ENCODE measurements at regions of chr22 and their contacts with region 1.

Region 1: DNA sequence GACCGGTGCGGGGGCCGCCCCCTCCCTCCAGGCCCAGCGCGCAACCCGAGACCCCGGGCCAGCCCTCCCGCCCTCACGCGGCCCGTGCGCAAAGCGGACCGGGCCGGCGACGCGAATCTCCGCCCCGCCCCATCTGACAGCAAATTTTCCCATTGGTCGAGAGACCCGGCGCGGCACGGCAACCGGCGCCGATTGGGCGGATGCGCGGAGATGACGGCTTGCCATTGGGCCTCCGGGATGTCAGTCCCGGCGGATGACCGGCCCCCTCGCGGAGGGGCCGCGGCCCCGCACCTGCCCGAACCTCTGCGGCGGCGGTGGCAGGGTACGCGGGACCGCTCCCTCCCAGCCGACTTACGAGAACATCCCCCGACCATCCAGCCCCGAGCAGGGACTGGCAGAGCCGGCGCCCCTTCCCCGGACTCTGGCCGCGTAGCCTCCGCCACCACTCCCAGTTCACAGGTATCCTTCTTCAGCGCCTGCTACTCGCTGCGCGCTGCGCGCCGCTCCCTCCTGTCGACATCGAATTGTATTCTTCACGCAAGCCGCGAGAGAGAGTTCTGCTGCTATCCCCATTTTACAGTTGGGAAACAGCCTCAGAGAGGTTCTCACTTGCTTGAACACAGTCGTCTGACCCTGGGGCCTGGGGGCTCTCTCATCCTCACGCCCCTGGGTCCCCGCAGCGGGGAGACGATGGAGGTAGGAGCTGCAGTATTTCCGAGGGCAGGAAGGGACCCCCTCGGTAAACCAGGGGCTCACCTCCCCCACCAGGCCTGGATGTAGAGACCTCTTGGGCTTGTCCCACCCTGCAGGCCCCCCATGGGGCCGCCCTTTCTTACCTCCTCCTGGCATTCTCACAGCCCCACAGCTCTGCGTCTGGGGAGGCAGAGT is at the start of gene ARVCF:
- DNase-seq: peak; percentile 95 to 96
- ATAC-seq: peak; percentile 65 to 74 (median 71)
- H3K4me3 ChIP-seq: peak within 1 kb of the TSS; percentile 78
- H3K4me3 Mint-ChIP-seq: peak within 1 kb of the TSS; percentile 92
- H3K27ac ChIP-seq: no peak within 1 kb of the TSS
- H3K27ac Mint-ChIP-seq: peak within 1 kb of the TSS in 1 of 2 donors; percentile 76
- H3K4me1 ChIP-seq: peaks cover 52% of the 10 kb centered on the region
- H3K4me1 Mint-ChIP-seq: peaks cover 21 to 37% of the 10 kb centered on the region in 2 donors
- H3K27me3 ChIP-seq: no peaks in the 10 kb centered on the region
- H3K27me3 Mint-ChIP-seq: no peaks in the 10 kb centered on the region
- CTCF ChIP-seq: no peak
- total RNA-seq, gene ARVCF: 37.8 to 62.0 (median 38.7) TPM

Region 2: GRCh38 chr22:19795617-19796008 is 221.4 kb before region 1 on chr22:
- intact Hi-C with region 1: no loop called
- DNase-seq: no peak
- ATAC-seq: peak in 1 of 3 donors; percentile 37
- H3K4me3 ChIP-seq: no peak overlapping the region
- H3K4me3 Mint-ChIP-seq: no peak overlapping the region
- H3K27ac ChIP-seq: no peak overlapping the region
- H3K27ac Mint-ChIP-seq: no peak overlapping the region
- H3K4me1 ChIP-seq: no peaks in the 10 kb centered on the region
- H3K4me1 Mint-ChIP-seq: no peaks in the 10 kb centered on the region
- H3K27me3 ChIP-seq: no peaks in the 10 kb centered on the region
- H3K27me3 Mint-ChIP-seq: no peaks in the 10 kb centered on the region
- CTCF ChIP-seq: no peak

Region 3: GRCh38 chr22:19844377-19845053 is 172.5 kb before region 1 on chr22:
- intact Hi-C with region 1: no loop called
- DNase-seq: peak in 1 of 2 donors; percentile 55
- ATAC-seq: peak in 1 of 3 donors; percentile 34
- H3K4me3 ChIP-seq: no peak overlapping the region
- H3K4me3 Mint-ChIP-seq: no peak overlapping the region
- H3K27ac ChIP-seq: no peak overlapping the region
- H3K27ac Mint-ChIP-seq: peak overlapping the region in 1 of 2 donors; percentile 58
- H3K4me1 ChIP-seq: peaks cover 18% of the 10 kb centered on the region
- H3K4me1 Mint-ChIP-seq: peaks cover 0 to 7% of the 10 kb centered on the region in 2 donors
- H3K27me3 ChIP-seq: no peaks in the 10 kb centered on the region
- H3K27me3 Mint-ChIP-seq: no peaks in the 10 kb centered on the region
- CTCF ChIP-seq: no peak

Region 4: GRCh38 chr22:19970479-19971275 is 46.3 kb before region 1 on chr22:
- intact Hi-C with region 1: loop called (anchors 1 kb)
- DNase-seq: peak; percentile 84 to 86
- ATAC-seq: peak; percentile 49 to 65 (median 60)
- H3K4me3 ChIP-seq: no peak overlapping the region
- H3K4me3 Mint-ChIP-seq: peak overlapping the region; percentile 87
- H3K27ac ChIP-seq: peak overlapping the region; percentile 61
- H3K27ac Mint-ChIP-seq: peak overlapping the region; percentile 84 to 85
- H3K4me1 ChIP-seq: peaks cover 76% of the 10 kb centered on the region
- H3K4me1 Mint-ChIP-seq: peaks cover 45 to 60% of the 10 kb centered on the region in 2 donors
- H3K27me3 ChIP-seq: no peaks in the 10 kb centered on the region
- H3K27me3 Mint-ChIP-seq: no peaks in the 10 kb centered on the region
- CTCF ChIP-seq: peak; percentile 96

Region 5: GRCh38 chr22:19986410-19987341 is 30.3 kb before region 1 on chr22:
- intact Hi-C with region 1: loop called (anchors 2 kb)
- DNase-seq: peak; percentile 71 to 79
- ATAC-seq: peak; percentile 91 to 98 (median 97)
- H3K4me3 ChIP-seq: peak overlapping the region; percentile 40
- H3K4me3 Mint-ChIP-seq: peak overlapping the region; percentile 75
- H3K27ac ChIP-seq: no peak overlapping the region
- H3K27ac Mint-ChIP-seq: no peak overlapping the region
- H3K4me1 ChIP-seq: peaks cover 27% of the 10 kb centered on the region
- H3K4me1 Mint-ChIP-seq: peaks cover 0 to 16% of the 10 kb centered on the region in 2 donors
- H3K27me3 ChIP-seq: no peaks in the 10 kb centered on the region
- H3K27me3 Mint-ChIP-seq: no peaks in the 10 kb centered on the region
- CTCF ChIP-seq: no peak

Region 6: DNA sequence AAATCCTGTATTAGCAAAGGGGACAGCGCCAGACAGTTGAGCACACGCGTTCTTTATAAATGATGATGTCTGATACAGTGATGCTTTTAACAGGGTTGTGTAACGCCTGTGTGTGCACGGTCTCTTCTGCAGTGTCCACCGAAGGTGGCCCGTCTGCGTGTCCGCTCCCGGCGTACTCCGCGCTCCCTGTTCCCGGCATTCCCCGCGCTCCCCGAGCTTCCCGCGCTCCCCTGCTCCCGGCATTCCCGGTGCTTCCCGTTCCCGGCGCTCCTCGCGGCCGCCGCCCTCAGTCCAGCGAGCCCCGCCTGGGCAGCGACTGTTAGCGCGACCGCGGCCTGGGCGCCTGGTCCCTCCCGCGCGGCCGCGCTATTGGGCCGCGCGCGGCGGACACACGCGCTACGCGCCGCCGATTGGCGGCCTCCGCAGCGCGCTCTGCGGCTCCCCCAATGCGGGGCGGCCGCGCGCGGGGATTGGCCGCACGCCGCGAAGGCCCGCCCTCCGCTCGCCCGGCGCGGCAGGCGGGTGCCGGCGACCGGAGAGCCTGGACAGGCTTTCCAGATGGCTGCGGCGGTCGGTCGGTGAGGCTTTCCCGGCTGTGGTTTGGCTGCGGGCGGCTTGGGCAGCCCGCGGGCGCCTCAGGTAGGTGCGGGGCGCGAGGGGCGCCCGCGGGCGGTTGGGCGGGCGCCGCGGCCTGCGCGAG is 62.9 kb after region 1 on chr22 and contains the start of gene DGCR8:
- intact Hi-C with region 1: loop called (anchors 2 kb)
- DNase-seq: peak; percentile 73 to 91
- ATAC-seq: peak; percentile 91 to 96 (median 95)
- H3K4me3 ChIP-seq: peak within 1 kb of the TSS; percentile 72
- H3K4me3 Mint-ChIP-seq: peak within 1 kb of the TSS; percentile 82
- H3K27ac ChIP-seq: peak within 1 kb of the TSS; percentile 17
- H3K27ac Mint-ChIP-seq: peak within 1 kb of the TSS; percentile 17 to 87
- H3K4me1 ChIP-seq: peaks cover 30% of the 10 kb centered on the region
- H3K4me1 Mint-ChIP-seq: peaks cover 33 to 38% of the 10 kb centered on the region in 2 donors
- H3K27me3 ChIP-seq: no peaks in the 10 kb centered on the region
- H3K27me3 Mint-ChIP-seq: no peaks in the 10 kb centered on the region
- CTCF ChIP-seq: no peak
- total RNA-seq, gene DGCR8: 45.3 to 64.7 (median 64.0) TPM